ENCODE measurements at regions of chr12 and their contacts with region 1.

Region 1: DNA sequence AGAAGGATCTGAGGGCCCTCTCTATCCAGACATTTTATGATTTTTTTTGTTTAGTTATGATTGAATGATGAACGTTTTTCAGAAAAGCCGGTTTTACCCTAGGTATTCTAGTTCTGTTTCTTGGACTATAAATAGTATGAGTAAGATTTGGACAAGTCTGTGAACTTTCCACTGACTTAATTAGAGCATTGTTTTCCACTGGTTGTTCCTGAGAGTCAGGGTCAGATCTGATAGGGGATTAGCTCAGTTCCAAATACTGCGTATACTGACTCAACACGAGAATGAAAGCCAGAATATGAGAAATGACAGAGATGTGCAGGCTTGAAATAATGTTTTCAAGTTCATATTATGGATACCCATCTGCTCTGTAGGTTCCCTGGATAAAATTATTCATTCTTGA is 361.6 kb downstream of the AEBP2 start:
- DNase-seq: no peak
- ATAC-seq: peak; percentile 90
- H3K4me3 Mint-ChIP-seq: no peak overlapping the region
- H3K27ac Mint-ChIP-seq: peak overlapping the region; percentile 85
- H3K4me1 Mint-ChIP-seq: peaks cover 40% of the 10 kb centered on the region
- H3K27me3 Mint-ChIP-seq: no peaks in the 10 kb centered on the region
- CTCF ChIP-seq: no peak

Region 2: DNA sequence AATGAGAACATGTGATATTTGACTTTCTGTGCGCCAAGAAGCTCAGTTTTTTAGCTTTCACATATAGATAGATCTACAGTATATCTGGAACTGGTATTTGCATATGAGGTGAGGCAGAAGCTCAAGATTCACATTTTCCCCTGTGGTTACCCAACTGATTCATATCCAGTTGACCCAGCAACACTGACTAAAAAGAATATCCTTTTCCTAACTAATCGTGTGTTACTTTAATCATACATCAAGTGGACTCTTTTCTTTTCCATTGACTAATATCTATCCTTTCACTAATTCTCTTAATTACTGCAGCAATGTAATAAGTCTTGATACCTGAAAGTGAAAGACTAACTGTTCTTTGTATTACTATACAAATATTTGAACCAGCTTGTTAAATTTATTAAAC is 125.5 kb before region 1 on chr12:
- CTCF ChIA-PET with region 1: no interaction called
- POLR2A ChIA-PET with region 1: no interaction called
- intact Hi-C with region 1: loop called (anchors 5 kb)
- DNase-seq: peak; percentile 36
- ATAC-seq: peak; percentile 95
- H3K4me3 Mint-ChIP-seq: no peak overlapping the region
- H3K27ac Mint-ChIP-seq: peak overlapping the region; percentile 87
- H3K4me1 Mint-ChIP-seq: peaks cover 51% of the 10 kb centered on the region
- H3K27me3 Mint-ChIP-seq: no peaks in the 10 kb centered on the region
- CTCF ChIP-seq: no peak